ENCODE measurements at regions of chr2 and their contacts with region 1.

Region 1: GRCh38 chr2:233251306-233252116 is at the start of gene ATG16L1:
- DNase-seq: peak; percentile 97
- H3K4me3 Mint-ChIP-seq: peak within 1 kb of the TSS; percentile 85
- H3K27ac Mint-ChIP-seq: peak within 1 kb of the TSS; percentile 97
- H3K4me1 Mint-ChIP-seq: peaks cover 70% of the 10 kb centered on the region
- H3K27me3 Mint-ChIP-seq: no peaks in the 10 kb centered on the region
- total RNA-seq, gene ATG16L1: 21.2 to 24.2 TPM

Region 2: GRCh38 chr2:232592772-232593395 is 658.6 kb before region 1 on chr2:
- CTCF ChIA-PET with region 1: no interaction called
- intact Hi-C with region 1: loop called (anchors 1 kb)
- DNase-seq: peak; percentile 24
- H3K4me3 Mint-ChIP-seq: no peak overlapping the region
- H3K27ac Mint-ChIP-seq: peak overlapping the region; percentile 74
- H3K4me1 Mint-ChIP-seq: peaks cover 8% of the 10 kb centered on the region
- H3K27me3 Mint-ChIP-seq: no peaks in the 10 kb centered on the region

Region 3: GRCh38 chr2:232761301-232761907 is 490.1 kb before region 1 on chr2:
- CTCF ChIA-PET with region 1: no interaction called
- intact Hi-C with region 1: loop called (anchors 1 kb)
- DNase-seq: peak; percentile 68
- H3K4me3 Mint-ChIP-seq: no peak overlapping the region
- H3K27ac Mint-ChIP-seq: no peak overlapping the region
- H3K4me1 Mint-ChIP-seq: peaks cover 15% of the 10 kb centered on the region
- H3K27me3 Mint-ChIP-seq: no peaks in the 10 kb centered on the region

Region 4: DNA sequence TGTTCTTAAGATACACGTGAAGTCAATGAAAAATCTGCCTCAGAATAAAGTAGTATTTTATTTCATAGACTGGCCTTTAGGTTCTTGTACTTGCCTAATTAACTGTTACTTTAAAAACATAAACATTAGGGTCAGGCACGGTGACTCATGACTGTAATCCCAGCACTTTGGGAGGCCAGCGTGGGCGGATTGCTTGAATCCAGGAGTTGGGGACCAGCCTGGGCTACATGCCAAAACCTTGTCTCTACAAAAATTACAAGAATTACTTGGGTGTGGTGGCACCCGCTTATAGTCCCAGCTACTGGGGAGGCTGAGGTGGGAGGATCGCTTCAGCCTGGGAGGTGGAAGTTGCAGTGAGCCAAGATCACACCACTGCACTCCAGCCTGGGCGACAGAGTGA is 397.4 kb before region 1 on chr2:
- CTCF ChIA-PET with region 1: interaction called, 4 read pairs
- intact Hi-C with region 1: loop called (anchors 1 kb)
- DNase-seq: no peak
- H3K4me3 Mint-ChIP-seq: no peak overlapping the region
- H3K27ac Mint-ChIP-seq: no peak overlapping the region
- H3K4me1 Mint-ChIP-seq: no peaks in the 10 kb centered on the region
- H3K27me3 Mint-ChIP-seq: no peaks in the 10 kb centered on the region

Region 5: DNA sequence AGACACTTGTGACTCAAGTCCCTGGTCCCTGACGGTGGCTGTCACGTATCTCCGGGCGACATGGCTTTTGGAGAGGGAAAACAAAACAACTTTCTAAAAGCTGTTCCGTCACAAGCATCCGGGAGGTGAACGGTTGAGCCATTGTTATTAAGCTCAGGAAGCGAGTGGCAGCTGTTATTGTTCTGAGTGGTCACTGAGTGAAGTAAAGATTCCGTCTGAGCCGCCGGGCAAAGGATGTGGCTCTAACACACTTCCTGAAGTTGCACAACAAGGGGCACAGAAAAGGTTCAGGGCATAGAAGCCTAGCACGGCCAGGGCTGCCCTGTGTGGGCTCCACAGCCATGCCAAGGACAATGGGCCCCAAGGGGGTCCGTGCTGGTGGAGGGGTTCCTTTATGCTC is 167.0 kb before region 1 on chr2:
- CTCF ChIA-PET with region 1: no interaction called
- intact Hi-C with region 1: loop called (anchors 1 kb)
- DNase-seq: peak; percentile 79
- H3K4me3 Mint-ChIP-seq: peak overlapping the region; percentile 58
- H3K27ac Mint-ChIP-seq: peak overlapping the region; percentile 96
- H3K4me1 Mint-ChIP-seq: peaks cover 80% of the 10 kb centered on the region
- H3K27me3 Mint-ChIP-seq: no peaks in the 10 kb centered on the region

Region 6: DNA sequence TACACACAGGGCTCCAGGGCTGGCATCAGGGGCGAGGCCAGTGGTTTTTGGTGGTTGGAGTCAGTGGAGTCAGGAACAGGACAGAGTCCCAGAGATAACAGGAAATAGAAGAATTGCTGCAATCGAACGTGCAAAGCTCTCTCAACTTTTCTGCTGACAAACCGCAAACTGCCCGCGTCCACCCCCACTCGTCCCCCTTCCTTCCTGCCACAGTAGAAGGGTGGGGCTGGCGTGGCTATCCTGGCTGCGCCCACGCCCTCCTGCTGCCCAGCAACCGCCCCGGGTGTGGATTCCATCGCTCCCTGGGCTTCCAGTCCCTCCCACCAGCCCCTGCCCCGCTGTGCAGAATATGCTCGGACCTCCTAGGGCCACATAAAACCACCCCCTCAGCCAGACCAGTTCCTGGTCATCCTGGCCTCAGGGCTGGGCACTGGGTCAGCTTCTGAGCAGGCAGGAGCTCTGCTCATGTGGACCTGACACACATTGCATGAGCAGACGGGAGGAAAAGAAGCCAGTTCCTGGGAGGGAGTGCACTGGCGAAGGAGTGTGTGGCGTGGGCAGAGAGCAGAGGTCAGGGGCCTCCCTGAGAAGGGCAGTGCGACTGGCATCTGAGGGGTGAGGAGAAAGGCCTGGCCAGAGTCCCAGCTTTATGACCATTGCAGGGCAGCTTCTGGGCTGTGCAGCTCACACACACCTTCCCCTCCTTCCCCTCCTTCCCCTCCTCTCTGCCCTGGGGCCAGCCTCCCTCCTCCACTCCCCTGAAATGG is 85.4 kb before region 1 on chr2:
- CTCF ChIA-PET with region 1: no interaction called
- intact Hi-C with region 1: no loop called
- DNase-seq: no peak
- H3K4me3 Mint-ChIP-seq: no peak overlapping the region
- H3K27ac Mint-ChIP-seq: no peak overlapping the region
- H3K4me1 Mint-ChIP-seq: no peaks in the 10 kb centered on the region
- H3K27me3 Mint-ChIP-seq: no peaks in the 10 kb centered on the region

Region 7: GRCh38 chr2:233193738-233194137 is 57.8 kb before region 1 on chr2:
- CTCF ChIA-PET with region 1: no interaction called
- intact Hi-C with region 1: no loop called
- DNase-seq: no peak
- H3K4me3 Mint-ChIP-seq: no peak overlapping the region
- H3K27ac Mint-ChIP-seq: no peak overlapping the region
- H3K4me1 Mint-ChIP-seq: no peaks in the 10 kb centered on the region
- H3K27me3 Mint-ChIP-seq: no peaks in the 10 kb centered on the region

Region 8: DNA sequence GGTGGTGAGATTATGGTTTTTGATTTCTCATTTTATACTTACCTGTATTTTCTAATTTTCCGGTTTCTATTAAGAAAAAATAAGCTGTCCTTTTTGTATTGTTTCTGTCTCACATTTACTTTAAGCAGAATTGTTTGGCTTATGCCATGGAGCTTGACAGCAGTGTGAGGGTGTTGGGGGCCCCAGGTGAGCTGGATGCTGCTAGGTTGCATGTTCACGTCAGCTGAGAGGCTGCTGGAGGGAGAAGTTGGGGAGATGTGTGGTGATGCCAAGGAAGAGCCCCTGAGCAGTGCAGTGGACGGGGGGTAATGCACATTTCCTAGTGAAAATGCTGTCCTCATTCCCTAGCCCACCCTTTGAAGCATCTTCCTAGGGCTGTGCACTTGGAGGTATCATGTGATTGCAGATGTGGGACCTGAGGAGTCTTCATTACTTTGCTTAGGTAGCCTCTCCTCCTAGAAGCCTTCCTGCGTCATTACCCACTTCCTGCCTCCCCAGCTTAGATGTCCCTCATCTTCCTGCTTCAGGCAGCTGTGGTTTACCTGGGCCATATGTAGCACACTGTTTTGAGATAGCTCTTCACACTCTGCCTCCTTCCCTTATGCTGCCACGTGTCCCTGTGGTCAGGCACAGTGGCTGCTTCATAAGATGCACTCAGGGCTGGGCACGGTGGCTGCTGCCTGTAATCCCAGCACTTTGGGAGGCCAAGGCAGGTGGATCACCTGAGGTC is 16.2 kb after region 1 on chr2:
- CTCF ChIA-PET with region 1: interaction called, 5 read pairs
- intact Hi-C with region 1: loop called (anchors 1 kb)
- DNase-seq: peak; percentile 88
- H3K4me3 Mint-ChIP-seq: peak overlapping the region; percentile 64
- H3K27ac Mint-ChIP-seq: peak overlapping the region; percentile 95
- H3K4me1 Mint-ChIP-seq: peaks cover 55% of the 10 kb centered on the region
- H3K27me3 Mint-ChIP-seq: no peaks in the 10 kb centered on the region